H1 (cell line): ENCODE measurements at regions of chr4 and their contacts with region 1.

Region 1: DNA sequence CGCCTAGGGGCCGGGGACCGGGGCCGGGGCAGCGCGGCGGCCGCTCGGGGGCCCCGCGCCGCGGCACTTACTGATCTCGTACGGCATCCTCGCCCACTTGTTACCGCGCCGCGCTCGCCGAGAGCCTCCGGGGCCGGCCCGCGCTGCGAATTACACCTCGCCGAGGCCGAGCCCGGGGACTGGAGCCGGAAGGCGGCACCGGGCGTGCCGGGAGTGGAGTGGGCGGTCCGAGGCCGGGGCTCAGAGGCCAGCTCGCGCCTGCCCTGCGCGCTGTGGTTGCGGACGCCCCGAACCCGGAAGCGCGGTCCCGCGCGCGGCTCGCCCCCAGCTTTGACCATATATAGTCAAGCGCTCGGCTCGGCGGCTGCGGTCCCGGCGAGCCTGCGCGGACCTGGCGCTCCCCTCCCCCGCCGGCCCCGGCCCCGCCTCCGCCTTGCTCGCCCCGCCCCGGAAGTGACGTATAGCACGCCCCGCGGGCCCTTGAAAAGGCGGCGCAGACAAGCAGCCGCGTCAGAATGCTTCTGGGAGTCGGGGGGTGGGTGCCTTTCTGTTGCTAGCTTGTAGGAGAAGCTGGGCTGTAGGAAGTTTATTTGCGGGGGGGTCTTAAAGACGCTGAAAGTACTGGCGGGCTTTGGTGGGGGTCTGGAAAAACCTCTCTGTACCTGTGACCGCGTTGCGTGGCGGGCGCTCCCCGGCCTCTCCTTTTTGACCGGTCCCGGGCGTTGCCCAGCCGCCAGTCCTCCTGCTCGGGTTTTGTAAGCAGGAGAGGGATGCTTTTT is at the start of gene WDR1:
- DNase-seq: peak; percentile 77 to 88
- H3K4me3 ChIP-seq: peak within 1 kb of the TSS; percentile 77 to 99 (median 88)
- H3K27ac ChIP-seq: peak within 1 kb of the TSS; percentile 96
- H3K4me1 ChIP-seq: peaks cover 17 to 34% (median 18%) of the 10 kb centered on the region in 4 experiments
- H3K27me3 ChIP-seq: no peaks in the 10 kb centered on the region
- CTCF ChIP-seq: no peak
- EP300 ChIP-seq: peak in 1 of 2 experiments; percentile 13; a peak in 1 of 3 replicates
- POLR2A ChIP-seq: peak in 1 of 2 experiments; percentile 88; a peak in 1 of 3 replicates
- RAD21 ChIP-seq: no peak
- total RNA-seq, gene WDR1: 315 and 339 TPM in 2 replicates

Region 2: GRCh38 chr4:10077483-10078335 is 39.1 kb before region 1 on chr4:
- CTCF ChIA-PET with region 1: no interaction called
- POLR2A ChIA-PET with region 1: interaction called, 10 read pairs
- DNase-seq: no peak
- H3K4me3 ChIP-seq: no peak overlapping the region
- H3K27ac ChIP-seq: no peak overlapping the region
- H3K4me1 ChIP-seq: no peaks in the 10 kb centered on the region
- H3K27me3 ChIP-seq: no peaks in the 10 kb centered on the region
- CTCF ChIP-seq: no peak
- EP300 ChIP-seq: no peak
- POLR2A ChIP-seq: no peak
- RAD21 ChIP-seq: no peak

Region 3: DNA sequence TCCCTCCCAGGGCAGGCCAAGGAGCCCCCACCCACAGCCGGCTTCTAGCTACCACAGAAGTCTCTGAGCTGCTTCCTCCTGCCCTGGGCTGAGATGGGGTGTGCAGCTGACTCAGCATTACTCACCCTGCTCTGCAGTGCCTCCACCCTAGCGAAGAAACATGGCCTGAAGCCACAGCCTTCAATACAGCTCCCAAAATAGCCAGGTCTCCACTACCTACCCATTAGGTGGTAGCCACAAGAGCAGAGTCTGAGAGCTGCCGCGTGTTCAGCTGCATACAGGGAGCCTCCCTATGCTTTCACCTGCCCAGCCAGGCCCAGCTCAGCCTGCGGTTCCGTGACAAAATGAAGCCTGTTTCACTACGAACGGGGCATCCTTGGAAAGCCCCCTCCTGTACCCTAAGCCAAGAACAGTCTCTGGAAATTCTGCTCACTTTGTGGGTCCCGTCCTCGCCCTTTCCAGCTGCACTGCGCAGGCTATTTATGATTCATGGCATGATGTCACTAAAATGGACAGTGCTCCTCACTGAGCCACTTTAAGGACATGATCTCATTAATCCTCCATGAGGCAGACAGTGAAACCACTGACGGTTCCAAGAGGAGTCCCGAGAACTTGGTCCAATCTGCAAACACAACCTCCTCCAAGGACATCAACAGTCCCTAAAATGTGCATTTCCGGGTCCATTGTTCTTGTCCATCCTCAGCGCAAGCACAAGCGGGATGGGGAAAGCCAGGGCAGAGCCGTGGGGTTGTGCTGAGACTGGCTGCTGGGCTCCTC is 20.4 kb before region 1 on chr4:
- CTCF ChIA-PET with region 1: interaction called, 4 read pairs
- POLR2A ChIA-PET with region 1: interaction called, 197 read pairs
- DNase-seq: no peak
- H3K4me3 ChIP-seq: no peak overlapping the region
- H3K27ac ChIP-seq: no peak overlapping the region
- H3K4me1 ChIP-seq: peaks cover 0 to 16% (median 9%) of the 10 kb centered on the region in 4 experiments; a peak in 6 of 7 replicates
- H3K27me3 ChIP-seq: no peaks in the 10 kb centered on the region
- CTCF ChIP-seq: no peak
- EP300 ChIP-seq: no peak
- POLR2A ChIP-seq: no peak
- RAD21 ChIP-seq: no peak

Region 4: GRCh38 chr4:10129196-10130177 is 12.7 kb after region 1 on chr4:
- CTCF ChIA-PET with region 1: interaction called, 3 read pairs
- POLR2A ChIA-PET with region 1: interaction called, 63 read pairs
- DNase-seq: no peak
- H3K4me3 ChIP-seq: no peak overlapping the region
- H3K27ac ChIP-seq: no peak overlapping the region
- H3K4me1 ChIP-seq: no peaks in the 10 kb centered on the region; a peak in 1 of 7 replicates
- H3K27me3 ChIP-seq: no peaks in the 10 kb centered on the region
- CTCF ChIP-seq: no peak
- EP300 ChIP-seq: no peak
- POLR2A ChIP-seq: no peak
- RAD21 ChIP-seq: no peak

Region 5: DNA sequence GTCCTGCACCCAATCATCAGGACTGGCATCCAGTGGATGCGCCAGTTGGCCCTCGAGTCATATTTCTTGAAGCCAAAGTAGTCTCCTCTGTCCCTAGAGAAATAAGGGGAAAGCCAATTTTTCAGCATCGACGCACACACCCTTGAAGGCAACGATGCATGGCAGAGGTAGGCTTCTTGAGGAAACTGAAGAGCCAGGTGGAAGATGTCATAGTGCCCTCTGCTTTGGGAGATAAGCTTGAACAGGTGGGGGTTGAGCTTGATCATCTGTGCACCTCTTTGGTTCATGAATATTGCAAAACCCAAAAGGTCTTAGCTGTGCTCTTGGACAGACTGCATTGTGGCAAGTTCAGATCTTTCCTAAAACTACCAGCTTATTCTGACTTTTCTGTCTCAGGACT is 34.4 kb after region 1 on chr4:
- CTCF ChIA-PET with region 1: interaction called, 3 read pairs
- POLR2A ChIA-PET with region 1: interaction called, 18 read pairs
- DNase-seq: no peak
- H3K4me3 ChIP-seq: no peak overlapping the region
- H3K27ac ChIP-seq: no peak overlapping the region
- H3K4me1 ChIP-seq: no peaks in the 10 kb centered on the region
- H3K27me3 ChIP-seq: no peaks in the 10 kb centered on the region; a peak in 1 of 7 replicates
- CTCF ChIP-seq: no peak
- EP300 ChIP-seq: no peak
- POLR2A ChIP-seq: no peak
- RAD21 ChIP-seq: no peak

Region 6: GRCh38 chr4:10364194-10364593 is 247.4 kb after region 1 on chr4:
- CTCF ChIA-PET with region 1: no interaction called
- POLR2A ChIA-PET with region 1: no interaction called
- DNase-seq: no peak
- H3K4me3 ChIP-seq: no peak overlapping the region
- H3K27ac ChIP-seq: no peak overlapping the region
- H3K4me1 ChIP-seq: 0 out of 7 replicates have a peak, but pooled peaks cover 0 to 2% (median 0%) of the 10 kb centered on the region in 4 experiments
- H3K27me3 ChIP-seq: peaks cover 0 to 2% (median 0%) of the 10 kb centered on the region in 4 experiments; a peak in 1 of 7 replicates
- CTCF ChIP-seq: no peak
- EP300 ChIP-seq: no peak
- POLR2A ChIP-seq: no peak
- RAD21 ChIP-seq: no peak